Naive thymus-derived CD4-positive, alpha-beta T cell (primary cell): ENCODE measurements at regions of chr15 and their contacts with region 1.

Region 1: GRCh38 chr15:90529371-90530249 is at the start of gene CRTC3:
- DNase-seq: peak; percentile 49 to 75 (median 67)
- ATAC-seq: peak; percentile 88
- H3K4me3 ChIP-seq: peak within 1 kb of the TSS; percentile 94
- H3K4me3 Mint-ChIP-seq: peak within 1 kb of the TSS; percentile 96 to 100 (median 97)
- H3K27ac ChIP-seq: peak within 1 kb of the TSS; percentile 92
- H3K27ac Mint-ChIP-seq: peak within 1 kb of the TSS; percentile 80 to 98 (median 94)
- H3K4me1 ChIP-seq: peaks cover 18% of the 10 kb centered on the region in 2 donors
- H3K4me1 Mint-ChIP-seq: peaks cover 34 to 49% (median 46%) of the 10 kb centered on the region in 7 donors
- H3K27me3 ChIP-seq: no peaks in the 10 kb centered on the region
- H3K27me3 Mint-ChIP-seq: no peaks in the 10 kb centered on the region
- total RNA-seq, gene CRTC3: 104 to 132 (median 109) TPM

Region 2: DNA sequence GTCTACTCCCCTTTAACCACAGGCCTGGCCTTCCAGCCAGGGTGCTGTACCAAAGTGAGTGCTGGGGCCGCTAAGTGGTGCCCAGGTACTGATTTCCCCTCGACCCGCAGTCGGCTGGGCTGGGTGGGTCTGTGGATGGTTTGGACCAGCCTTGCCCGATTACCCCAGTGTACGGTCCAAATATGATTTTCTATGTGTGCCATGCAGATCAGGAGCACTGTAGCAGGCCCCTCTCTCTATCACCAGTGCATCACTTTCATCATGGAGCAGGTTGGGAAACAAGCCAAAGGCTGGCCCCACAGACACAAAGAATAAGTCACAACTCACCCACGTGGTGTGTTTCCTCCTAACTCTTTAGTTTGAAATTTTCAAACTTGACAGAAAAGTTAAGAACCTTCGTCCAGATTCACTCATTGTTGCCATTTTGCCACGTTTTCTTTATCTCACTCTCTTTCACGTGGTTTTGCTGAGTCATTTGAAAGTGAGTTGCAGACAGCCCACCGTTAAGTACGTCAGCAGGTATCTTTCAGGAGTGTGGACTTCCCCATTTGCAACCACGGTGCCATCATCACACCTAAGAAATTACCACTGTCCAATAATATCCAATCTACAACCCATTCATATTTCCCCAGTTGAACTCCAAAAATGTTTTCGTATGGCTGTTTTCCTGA is 491.5 kb before region 1 on chr15:
- CTCF ChIA-PET with region 1: no interaction called
- POLR2A ChIA-PET with region 1: no interaction called
- intact Hi-C with region 1: no loop called
- DNase-seq: peak in 2 of 9 donors; percentile 34 to 47
- ATAC-seq: peak; percentile 57
- H3K4me3 ChIP-seq: no peak overlapping the region
- H3K4me3 Mint-ChIP-seq: peak overlapping the region in 3 of 10 donors; percentile 29 to 45 (median 29)
- H3K27ac ChIP-seq: no peak overlapping the region
- H3K27ac Mint-ChIP-seq: peak overlapping the region in 6 of 9 donors; percentile 11 to 81 (median 43)
- H3K4me1 ChIP-seq: peaks cover 28 to 29% of the 10 kb centered on the region in 2 donors
- H3K4me1 Mint-ChIP-seq: peaks cover 40 to 80% (median 56%) of the 10 kb centered on the region in 7 donors
- H3K27me3 ChIP-seq: no peaks in the 10 kb centered on the region
- H3K27me3 Mint-ChIP-seq: no peaks in the 10 kb centered on the region

Region 3: GRCh38 chr15:90539789-90540188 is 10.2 kb after region 1 on chr15:
- CTCF ChIA-PET with region 1: interaction called, 11 read pairs
- POLR2A ChIA-PET with region 1: interaction called, 21 read pairs
- intact Hi-C with region 1: loop called (anchors 1 kb)
- DNase-seq: peak in 7 of 9 donors; percentile 66 to 84 (median 79)
- ATAC-seq: peak; percentile 89
- H3K4me3 ChIP-seq: peak overlapping the region; percentile 7
- H3K4me3 Mint-ChIP-seq: peak overlapping the region; percentile 79 to 97 (median 88)
- H3K27ac ChIP-seq: peak overlapping the region; percentile 83
- H3K27ac Mint-ChIP-seq: peak overlapping the region; percentile 94 to 99 (median 97)
- H3K4me1 ChIP-seq: peaks cover 7 to 67% of the 10 kb centered on the region in 2 donors
- H3K4me1 Mint-ChIP-seq: peaks cover 45 to 93% (median 86%) of the 10 kb centered on the region in 7 donors
- H3K27me3 ChIP-seq: no peaks in the 10 kb centered on the region
- H3K27me3 Mint-ChIP-seq: no peaks in the 10 kb centered on the region

Region 4: DNA sequence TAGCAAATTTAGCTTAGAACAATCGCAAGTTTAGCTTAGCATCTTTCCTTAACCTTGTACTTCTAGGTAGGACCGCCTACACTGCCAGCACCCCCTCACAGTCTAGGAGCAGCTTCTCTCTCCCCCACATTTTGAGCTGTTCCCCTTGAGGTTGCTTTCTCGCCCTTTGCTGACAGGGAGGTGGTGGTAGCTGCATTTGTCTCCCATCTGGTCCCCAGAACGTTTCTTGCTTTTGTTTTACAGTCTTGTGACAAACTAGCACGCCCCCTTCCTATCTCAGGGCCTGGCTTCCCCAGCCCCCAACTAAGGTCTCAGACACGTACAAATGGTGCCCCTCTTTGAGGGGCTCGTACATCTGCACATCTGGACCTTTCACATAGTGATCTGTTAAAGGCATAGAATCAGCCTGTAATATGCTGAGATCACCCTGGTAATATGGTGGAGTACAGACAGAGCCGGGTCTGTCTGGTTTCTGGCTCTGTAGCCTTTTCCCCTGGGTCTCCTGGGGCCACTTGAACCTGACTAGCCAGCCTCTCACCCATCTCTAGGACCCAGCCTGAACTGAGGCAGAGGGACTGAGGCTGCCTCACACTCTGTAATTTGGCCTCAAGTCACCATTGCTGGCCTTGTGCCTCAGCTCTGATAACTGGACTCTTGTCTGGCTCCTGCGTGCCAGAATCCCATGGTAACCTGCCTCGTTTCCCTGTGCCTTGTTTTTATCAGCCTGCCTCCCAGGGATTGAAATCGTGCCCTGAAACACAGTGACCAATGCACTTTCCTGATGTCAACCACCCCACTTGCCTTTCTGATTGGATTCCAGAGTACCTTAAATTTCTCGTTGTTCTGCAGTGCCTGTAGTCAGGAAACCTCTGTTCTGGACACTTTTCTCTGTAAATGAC is 27.8 kb after region 1 on chr15:
- CTCF ChIA-PET with region 1: no interaction called
- POLR2A ChIA-PET with region 1: interaction called, 12 read pairs
- intact Hi-C with region 1: loop called (anchors 1 to 2 kb)
- DNase-seq: peak in 1 of 9 donors; percentile 18
- ATAC-seq: no peak
- H3K4me3 ChIP-seq: no peak overlapping the region
- H3K4me3 Mint-ChIP-seq: peak overlapping the region; percentile 22 to 70 (median 54)
- H3K27ac ChIP-seq: peak overlapping the region; percentile 14
- H3K27ac Mint-ChIP-seq: peak overlapping the region; percentile 57 to 95 (median 86)
- H3K4me1 ChIP-seq: peaks cover 10 to 50% of the 10 kb centered on the region in 2 donors
- H3K4me1 Mint-ChIP-seq: peaks cover 56 to 89% (median 85%) of the 10 kb centered on the region in 7 donors
- H3K27me3 ChIP-seq: no peaks in the 10 kb centered on the region
- H3K27me3 Mint-ChIP-seq: no peaks in the 10 kb centered on the region

Region 5: DNA sequence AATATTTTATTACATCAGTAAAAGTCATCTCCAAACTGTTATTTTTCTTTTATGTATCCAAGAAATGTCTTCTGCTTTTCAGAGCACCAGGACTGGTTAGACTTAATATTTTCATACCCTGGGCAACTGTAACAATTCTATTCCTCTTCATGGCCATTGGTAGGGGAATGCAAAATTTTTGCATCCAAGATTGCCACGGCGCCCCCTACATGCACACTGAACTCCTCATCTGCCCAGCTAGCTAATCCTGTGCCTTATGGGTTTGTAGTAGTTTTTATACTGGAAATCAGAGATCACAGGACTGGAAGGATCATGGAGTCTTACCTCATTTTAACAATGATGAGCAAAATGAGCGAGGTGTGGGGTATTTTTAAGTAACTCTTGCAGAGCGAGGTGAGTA is 74.3 kb after region 1 on chr15:
- CTCF ChIA-PET with region 1: interaction called, 6 read pairs
- POLR2A ChIA-PET with region 1: interaction called, 4 read pairs
- intact Hi-C with region 1: loop called in 1 of 2 experiments (anchors 2 kb)
- DNase-seq: peak in 4 of 9 donors; percentile 35 to 44 (median 38)
- ATAC-seq: peak; percentile 55
- H3K4me3 ChIP-seq: no peak overlapping the region
- H3K4me3 Mint-ChIP-seq: peak overlapping the region in 2 of 10 donors; percentile 0 to 7
- H3K27ac ChIP-seq: no peak overlapping the region
- H3K27ac Mint-ChIP-seq: peak overlapping the region in 8 of 9 donors; percentile 14 to 83 (median 70)
- H3K4me1 ChIP-seq: peaks cover 0 to 32% of the 10 kb centered on the region in 2 donors
- H3K4me1 Mint-ChIP-seq: peaks cover 37 to 76% (median 58%) of the 10 kb centered on the region in 7 donors
- H3K27me3 ChIP-seq: no peaks in the 10 kb centered on the region
- H3K27me3 Mint-ChIP-seq: no peaks in the 10 kb centered on the region